Activated T-helper 2 cell treated with anti-CD3 and anti-CD28 coated beads, Interferon-gamma antibody, Interleukin-2, Interleukin-4, amounts not matched to agents 10 μg/mL and 5 μg/mL and 100 μg/mL, durations not matched to agents 14 hours and 24 hours and 36 hours (primary cell): ENCODE measurements at regions of chr4 and their contacts with region 1.

Region 1: DNA sequence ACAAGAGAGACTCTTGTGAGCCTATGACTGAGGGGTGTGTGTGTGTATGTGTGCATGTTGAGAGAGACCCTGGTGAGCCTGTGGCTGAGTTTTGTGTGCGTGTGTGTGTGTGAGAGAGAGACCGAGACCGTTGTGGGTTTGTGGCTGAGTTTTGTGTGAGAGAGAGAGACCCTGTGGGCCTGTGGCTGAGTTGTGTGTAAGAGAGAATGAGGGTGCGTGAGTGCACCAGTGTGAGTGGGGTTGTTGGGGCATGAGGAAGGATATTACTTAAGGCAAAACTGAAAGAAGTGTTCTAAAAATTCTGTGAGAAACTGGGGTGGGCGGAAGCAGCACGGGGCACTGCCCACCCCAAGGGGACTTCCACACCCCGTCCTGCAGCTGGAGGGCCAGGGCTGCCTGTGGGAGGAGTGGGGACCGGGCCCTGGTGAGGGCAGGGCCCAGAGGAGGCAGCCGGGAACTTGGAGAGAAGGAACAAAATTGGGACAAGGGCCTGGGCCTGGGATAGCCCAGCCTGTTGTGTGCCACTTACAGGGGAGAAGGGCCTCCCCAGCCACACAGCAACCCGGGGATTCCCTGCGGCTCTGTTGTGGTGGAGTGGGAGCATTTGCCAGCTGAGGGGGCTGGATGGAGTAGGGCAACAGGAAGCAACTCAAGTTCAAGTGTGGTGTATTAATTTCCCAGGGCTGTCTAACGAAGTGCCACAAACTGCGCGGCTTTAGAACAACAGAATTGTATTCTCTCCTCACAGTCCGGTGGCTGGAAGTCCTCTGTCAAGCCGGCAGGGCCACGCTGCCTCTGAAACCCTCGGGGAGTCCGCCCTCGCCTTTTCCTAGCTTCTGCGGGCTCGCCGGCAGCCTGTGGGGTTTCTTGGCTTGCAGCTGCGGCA is 22.1 kb downstream of the TMEM131L start:
- DNase-seq: peak; percentile 61
- H3K4me3 Mint-ChIP-seq: peak overlapping the region; percentile 64
- H3K27ac Mint-ChIP-seq: peak overlapping the region; percentile 90
- H3K4me1 Mint-ChIP-seq: peaks cover 63% of the 10 kb centered on the region
- H3K27me3 Mint-ChIP-seq: no peaks in the 10 kb centered on the region

Region 2: DNA sequence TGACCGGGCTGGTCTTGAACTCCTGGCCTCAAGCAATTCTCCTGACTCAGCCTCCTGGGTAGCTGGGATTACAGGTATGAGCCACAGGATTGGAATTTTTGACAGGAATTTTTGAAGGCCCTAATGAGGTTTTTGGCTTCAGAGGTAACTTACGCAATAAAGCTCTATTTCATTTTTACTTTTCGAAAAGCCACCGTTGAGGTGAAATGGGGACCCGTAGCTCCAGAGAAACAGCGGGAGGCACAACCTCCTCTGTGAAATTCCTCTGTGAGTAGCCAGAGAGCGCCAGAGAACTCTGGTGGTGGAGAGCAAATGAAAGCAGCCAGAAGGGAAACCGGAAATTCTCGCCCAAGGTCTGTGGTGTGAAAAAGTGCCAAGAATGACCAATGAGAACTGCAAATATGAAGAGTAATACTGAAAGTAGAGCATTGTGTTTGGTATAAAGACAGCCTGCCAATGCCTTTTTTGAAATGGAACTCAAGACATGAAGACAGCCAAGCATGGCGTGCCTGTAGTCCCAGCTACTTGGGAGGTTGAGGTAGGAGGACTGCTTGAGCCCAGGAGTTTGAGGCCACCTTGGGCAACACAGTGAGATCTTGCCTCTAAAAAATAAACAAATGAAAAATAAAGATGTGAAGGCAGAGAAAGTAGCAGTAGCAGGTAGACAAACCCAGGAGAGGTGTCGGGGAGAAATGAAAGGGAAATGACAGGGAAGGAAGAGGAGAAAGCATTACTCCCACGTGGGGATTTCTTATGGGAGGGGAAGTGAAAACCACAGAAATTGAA is 55.1 kb before region 1 on chr4:
- intact Hi-C with region 1: loop called (anchors 1 kb)
- DNase-seq: peak; percentile 76
- H3K4me3 Mint-ChIP-seq: peak overlapping the region; percentile 73
- H3K27ac Mint-ChIP-seq: peak overlapping the region; percentile 94
- H3K4me1 Mint-ChIP-seq: peaks cover 51% of the 10 kb centered on the region
- H3K27me3 Mint-ChIP-seq: no peaks in the 10 kb centered on the region

Region 3: DNA sequence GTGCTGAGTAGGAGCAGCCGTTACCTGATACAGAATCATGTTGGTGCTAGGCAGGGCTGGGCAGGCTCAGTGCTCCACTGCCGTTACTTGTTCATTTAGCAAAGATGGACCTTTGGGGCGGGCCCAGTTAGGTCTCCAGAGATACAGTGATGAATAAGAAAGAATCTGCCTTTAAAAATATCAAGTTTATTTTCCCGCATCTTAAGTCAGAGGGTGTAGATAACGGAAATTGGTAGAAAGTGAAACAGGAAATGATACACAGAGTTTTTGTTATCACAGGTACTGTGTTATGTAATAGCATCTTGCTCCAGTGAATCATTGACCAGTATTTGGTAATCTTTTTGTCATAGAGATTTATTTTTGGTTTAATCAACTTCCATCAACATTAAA is 16.6 kb before region 1 on chr4:
- intact Hi-C with region 1: loop called (anchors 1 kb)
- DNase-seq: no peak
- H3K4me3 Mint-ChIP-seq: peak overlapping the region; percentile 66
- H3K27ac Mint-ChIP-seq: peak overlapping the region; percentile 15
- H3K4me1 Mint-ChIP-seq: peaks cover 68% of the 10 kb centered on the region
- H3K27me3 Mint-ChIP-seq: no peaks in the 10 kb centered on the region

Region 4: GRCh38 chr4:153521999-153522801 is 34.0 kb after region 1 on chr4:
- intact Hi-C with region 1: loop called (anchors 1 kb)
- DNase-seq: peak; percentile 60
- H3K4me3 Mint-ChIP-seq: peak overlapping the region; percentile 71
- H3K27ac Mint-ChIP-seq: peak overlapping the region; percentile 98
- H3K4me1 Mint-ChIP-seq: peaks cover 87% of the 10 kb centered on the region
- H3K27me3 Mint-ChIP-seq: no peaks in the 10 kb centered on the region

Region 5: DNA sequence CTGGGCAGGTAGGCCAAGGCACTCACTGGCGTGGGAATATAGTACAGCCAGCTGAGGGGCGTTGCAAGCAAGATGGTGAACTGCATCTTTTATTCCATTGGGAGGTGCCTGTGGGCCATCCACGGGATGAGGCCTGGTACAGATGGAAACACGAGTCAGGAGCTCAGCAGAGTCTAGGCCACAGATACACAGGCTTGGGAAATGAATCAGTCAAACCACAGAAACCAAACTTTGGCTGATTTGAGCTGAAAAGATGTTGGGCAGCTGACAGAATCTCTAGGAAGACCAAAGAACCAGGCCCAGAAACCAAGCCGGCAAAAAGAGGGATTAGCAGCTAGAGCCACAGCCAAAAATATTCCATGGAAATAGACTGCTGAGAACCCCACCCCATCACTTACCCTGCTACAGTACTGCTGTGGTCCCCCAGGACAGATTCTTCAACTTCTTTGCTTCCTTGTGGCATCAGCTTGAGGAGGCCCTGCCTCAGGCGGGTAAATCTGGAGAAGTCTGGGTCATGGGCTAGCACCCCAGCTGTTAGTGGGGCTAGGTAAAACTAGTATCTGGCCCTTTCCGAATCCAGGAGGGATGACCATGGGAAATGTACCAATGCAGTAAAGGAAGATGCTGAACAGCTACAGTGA is 53.3 kb after region 1 on chr4:
- intact Hi-C with region 1: no loop called
- DNase-seq: no peak
- H3K4me3 Mint-ChIP-seq: no peak overlapping the region
- H3K27ac Mint-ChIP-seq: no peak overlapping the region
- H3K4me1 Mint-ChIP-seq: peaks cover 30% of the 10 kb centered on the region
- H3K27me3 Mint-ChIP-seq: no peaks in the 10 kb centered on the region

Region 6: DNA sequence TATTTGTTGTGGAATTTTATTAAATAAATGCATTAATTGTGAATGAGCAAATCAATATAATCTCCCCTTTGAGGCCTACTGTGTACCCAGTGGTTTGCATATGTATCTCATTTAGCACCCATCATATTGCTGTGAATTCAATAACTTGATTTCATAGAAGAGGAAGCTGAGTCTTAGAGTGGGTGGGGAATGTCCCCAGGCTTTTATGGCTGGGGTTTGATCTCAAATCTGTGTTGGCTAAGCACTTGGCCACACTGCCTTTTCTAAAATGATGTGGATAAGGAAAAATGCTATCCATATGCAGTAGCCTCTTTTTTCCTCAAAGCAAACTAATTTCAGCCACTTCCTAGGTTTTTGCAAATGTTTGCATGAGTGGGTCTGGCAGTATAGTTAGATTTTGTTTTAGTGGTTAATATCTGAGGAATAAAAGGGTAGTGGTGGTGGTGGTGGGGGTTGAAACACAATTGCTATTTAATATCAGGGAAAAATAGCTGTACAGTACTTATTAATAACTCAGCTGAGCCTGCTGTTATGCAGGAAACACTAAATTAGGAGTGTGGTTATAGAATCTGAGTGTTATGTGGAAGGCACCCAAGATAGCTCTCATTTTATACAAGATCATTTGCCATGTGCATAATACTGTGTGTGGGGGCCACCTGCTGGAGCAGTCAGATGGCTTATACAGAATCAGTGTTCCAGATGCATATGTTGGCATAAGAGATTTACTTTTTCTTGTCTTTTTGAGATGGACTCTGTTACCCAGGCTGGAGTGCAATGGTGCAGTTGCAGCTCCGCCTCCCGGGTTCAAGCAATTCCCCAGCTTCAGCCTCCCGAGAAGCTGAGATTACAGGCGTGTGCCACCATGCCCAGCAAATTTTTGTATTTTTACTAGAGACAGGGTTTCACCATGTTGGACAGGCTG is 85.9 kb after region 1 on chr4:
- intact Hi-C with region 1: loop called (anchors 1 kb)
- DNase-seq: peak; percentile 55
- H3K4me3 Mint-ChIP-seq: no peak overlapping the region
- H3K27ac Mint-ChIP-seq: peak overlapping the region; percentile 20
- H3K4me1 Mint-ChIP-seq: peaks cover 57% of the 10 kb centered on the region
- H3K27me3 Mint-ChIP-seq: no peaks in the 10 kb centered on the region